ENCODE measurements at regions of chr4 and their contacts with region 1.

Region 1: DNA sequence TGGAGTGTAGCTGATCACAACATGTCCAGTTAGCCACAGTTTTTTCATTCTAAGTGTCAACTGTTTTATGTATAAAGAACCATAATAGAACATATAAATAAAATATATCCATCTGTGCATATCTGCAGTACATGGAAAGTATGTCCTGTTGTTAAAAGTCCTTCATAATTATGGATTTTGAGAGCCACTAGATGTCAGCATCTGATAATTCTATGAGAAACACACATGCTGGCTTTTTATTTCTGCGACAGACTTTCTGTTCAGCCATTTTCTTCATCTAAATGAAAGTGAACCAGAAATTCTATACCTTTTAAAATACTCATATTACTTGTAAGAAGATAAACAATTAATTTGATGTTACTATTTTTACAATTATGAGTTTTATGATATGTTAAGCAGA is 251.5 kb downstream of the GPM6A start:
- DNase-seq: peak; percentile 32
- ATAC-seq: peak; percentile 69
- H3K4me3 ChIP-seq: no peak overlapping the region
- H3K27ac ChIP-seq: no peak overlapping the region
- H3K4me1 ChIP-seq: no peaks in the 10 kb centered on the region
- H3K27me3 ChIP-seq: no peaks in the 10 kb centered on the region
- CTCF ChIP-seq: peak; percentile 14 to 62 (median 47); a peak in 3 of 6 replicates
- POLR2A ChIP-seq: no peak
- RAD21 ChIP-seq: peak; percentile 83

Region 2: GRCh38 chr4:175891851-175892250 is 331.2 kb after region 1 on chr4:
- CTCF ChIA-PET with region 1: interaction called, 3 read pairs
- POLR2A ChIA-PET with region 1: no interaction called
- RAD21 ChIA-PET with region 1: no interaction called
- intact Hi-C with region 1: loop called (anchors 1 kb)
- DNase-seq: peak; percentile 38
- ATAC-seq: peak; percentile 78
- H3K4me3 ChIP-seq: no peak overlapping the region
- H3K27ac ChIP-seq: no peak overlapping the region
- H3K4me1 ChIP-seq: no peaks in the 10 kb centered on the region
- H3K27me3 ChIP-seq: no peaks in the 10 kb centered on the region
- CTCF ChIP-seq: peak; percentile 27 to 49 (median 47); a peak in 4 of 6 replicates
- POLR2A ChIP-seq: no peak
- RAD21 ChIP-seq: peak; percentile 63

Region 3: DNA sequence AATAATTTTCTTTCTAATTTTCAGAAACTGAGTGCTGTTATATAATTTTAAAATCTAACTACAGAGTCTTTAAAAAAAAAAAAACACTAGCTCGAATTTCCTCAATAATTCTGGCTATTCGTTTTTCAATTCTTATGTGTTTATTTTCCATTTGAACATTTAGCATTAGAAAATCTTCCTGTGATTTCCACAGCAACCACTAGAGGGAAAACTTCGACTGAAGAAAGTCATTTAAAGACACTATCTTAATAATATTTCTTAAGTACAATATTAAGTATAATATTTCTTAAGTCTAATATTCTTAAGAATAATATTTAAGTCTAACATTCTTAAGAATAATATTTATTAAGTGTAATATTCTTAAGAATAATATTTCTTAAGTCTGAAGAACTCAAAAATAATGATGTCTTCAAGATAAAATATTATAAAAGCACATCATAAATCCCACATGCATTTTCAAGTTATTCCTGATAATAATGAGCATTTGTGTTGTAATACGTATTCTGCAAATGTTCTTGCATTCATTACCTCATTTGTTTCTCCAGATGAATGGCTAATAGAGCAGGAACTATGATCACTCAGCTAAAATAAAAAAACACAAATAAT is 386.6 kb after region 1 on chr4:
- CTCF ChIA-PET with region 1: no interaction called
- POLR2A ChIA-PET with region 1: no interaction called
- RAD21 ChIA-PET with region 1: no interaction called
- intact Hi-C with region 1: loop called (anchors 5 kb)
- DNase-seq: peak; percentile 27
- ATAC-seq: no peak
- H3K4me3 ChIP-seq: no peak overlapping the region
- H3K27ac ChIP-seq: no peak overlapping the region
- H3K4me1 ChIP-seq: no peaks in the 10 kb centered on the region
- H3K27me3 ChIP-seq: no peaks in the 10 kb centered on the region
- CTCF ChIP-seq: peak; percentile 41 to 52 (median 47); a peak in 4 of 6 replicates
- POLR2A ChIP-seq: no peak
- RAD21 ChIP-seq: peak; percentile 56; the same call in 1 of the 2 replicates

Region 4: GRCh38 chr4:176034499-176034898 is 473.9 kb after region 1 on chr4:
- CTCF ChIA-PET with region 1: interaction called, 3 read pairs
- POLR2A ChIA-PET with region 1: no interaction called
- RAD21 ChIA-PET with region 1: no interaction called
- intact Hi-C with region 1: loop called (anchors 10 kb)
- DNase-seq: peak; percentile 27
- ATAC-seq: no peak
- H3K4me3 ChIP-seq: no peak overlapping the region
- H3K27ac ChIP-seq: no peak overlapping the region
- H3K4me1 ChIP-seq: no peaks in the 10 kb centered on the region
- H3K27me3 ChIP-seq: no peaks in the 10 kb centered on the region
- CTCF ChIP-seq: peak in 2 of 3 experiments; percentile 50 to 54; a peak in 3 of 6 replicates
- POLR2A ChIP-seq: no peak
- RAD21 ChIP-seq: peak; percentile 74

Region 5: GRCh38 chr4:176123710-176124407 is 563.3 kb after region 1 on chr4:
- CTCF ChIA-PET with region 1: no interaction called
- POLR2A ChIA-PET with region 1: no interaction called
- RAD21 ChIA-PET with region 1: no interaction called
- intact Hi-C with region 1: loop called (anchors 2 kb)
- DNase-seq: peak; percentile 26
- ATAC-seq: peak; percentile 95
- H3K4me3 ChIP-seq: no peak overlapping the region
- H3K27ac ChIP-seq: no peak overlapping the region
- H3K4me1 ChIP-seq: no peaks in the 10 kb centered on the region
- H3K27me3 ChIP-seq: no peaks in the 10 kb centered on the region
- CTCF ChIP-seq: peak; percentile 39 to 84 (median 77); a peak in 5 of 6 replicates
- POLR2A ChIP-seq: no peak
- RAD21 ChIP-seq: peak; percentile 44; the same call in 1 of the 2 replicates

Region 6: DNA sequence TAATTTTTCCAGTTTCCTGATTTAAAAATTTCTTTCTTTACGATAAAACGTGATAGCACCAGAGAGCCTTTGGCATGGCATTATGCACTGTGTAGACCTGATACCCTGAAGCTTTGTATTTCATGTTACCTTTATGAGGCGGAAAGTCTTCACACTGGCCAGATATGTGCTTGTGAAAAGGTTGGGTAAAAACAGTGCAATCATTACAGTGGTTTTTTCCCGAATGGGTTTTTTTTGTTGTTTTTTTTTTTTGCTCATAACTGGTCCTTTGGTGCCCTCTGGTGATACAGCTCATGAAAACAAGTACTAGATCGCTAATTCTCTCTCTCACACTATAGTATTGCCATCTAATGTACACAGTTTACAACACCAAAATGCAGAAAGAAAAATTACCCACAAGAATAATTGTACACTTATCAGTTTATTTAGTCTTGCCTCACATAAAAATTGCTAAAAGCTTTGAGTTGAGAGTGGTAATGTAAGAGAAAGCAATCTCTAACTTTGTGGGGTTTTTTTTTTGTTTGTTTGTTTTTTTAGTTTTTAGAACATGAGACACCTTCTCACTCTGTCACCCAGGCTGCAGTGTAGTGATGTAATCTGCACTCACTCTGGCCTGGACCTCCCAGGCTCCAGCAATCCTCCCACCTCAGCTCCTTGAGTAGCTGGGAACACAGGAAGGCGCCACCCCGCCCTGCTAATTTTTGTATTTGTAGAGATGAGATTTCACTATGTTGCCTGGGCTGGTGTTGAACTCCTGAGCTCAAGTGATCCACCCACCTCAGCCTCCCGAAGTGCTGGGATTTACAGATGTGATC is 780.5 kb after region 1 on chr4:
- CTCF ChIA-PET with region 1: no interaction called
- POLR2A ChIA-PET with region 1: no interaction called
- RAD21 ChIA-PET with region 1: no interaction called
- intact Hi-C with region 1: loop called (anchors 1 kb)
- DNase-seq: no peak
- ATAC-seq: peak; percentile 57; the same call in 1 of the 2 replicates
- H3K4me3 ChIP-seq: no peak overlapping the region
- H3K27ac ChIP-seq: no peak overlapping the region
- H3K4me1 ChIP-seq: no peaks in the 10 kb centered on the region
- H3K27me3 ChIP-seq: no peaks in the 10 kb centered on the region
- CTCF ChIP-seq: peak; percentile 44 to 71 (median 66)
- POLR2A ChIP-seq: no peak
- RAD21 ChIP-seq: peak; percentile 76